WTC11 (cell line): ENCODE measurements at regions of chr17 and their contacts with region 1.

Region 1: GRCh38 chr17:77214743-77215142 is 74.0 kb downstream of the SEC14L1 start:
- DNase-seq: peak; percentile 72
- ATAC-seq: peak; percentile 96
- H3K4me3 Mint-ChIP-seq: no peak overlapping the region
- H3K27ac Mint-ChIP-seq: no peak overlapping the region
- H3K4me1 Mint-ChIP-seq: peaks cover 4% of the 10 kb centered on the region
- H3K27me3 Mint-ChIP-seq: no peaks in the 10 kb centered on the region
- CTCF ChIP-seq: no peak

Region 2: GRCh38 chr17:77107506-77108433 is 107.0 kb before region 1 on chr17:
- CTCF ChIA-PET with region 1: interaction called, 11 read pairs
- POLR2A ChIA-PET with region 1: no interaction called
- DNase-seq: no peak
- ATAC-seq: no peak
- H3K4me3 Mint-ChIP-seq: no peak overlapping the region
- H3K27ac Mint-ChIP-seq: peak overlapping the region; percentile 45
- H3K4me1 Mint-ChIP-seq: peaks cover 59% of the 10 kb centered on the region
- H3K27me3 Mint-ChIP-seq: no peaks in the 10 kb centered on the region
- CTCF ChIP-seq: no peak

Region 3: DNA sequence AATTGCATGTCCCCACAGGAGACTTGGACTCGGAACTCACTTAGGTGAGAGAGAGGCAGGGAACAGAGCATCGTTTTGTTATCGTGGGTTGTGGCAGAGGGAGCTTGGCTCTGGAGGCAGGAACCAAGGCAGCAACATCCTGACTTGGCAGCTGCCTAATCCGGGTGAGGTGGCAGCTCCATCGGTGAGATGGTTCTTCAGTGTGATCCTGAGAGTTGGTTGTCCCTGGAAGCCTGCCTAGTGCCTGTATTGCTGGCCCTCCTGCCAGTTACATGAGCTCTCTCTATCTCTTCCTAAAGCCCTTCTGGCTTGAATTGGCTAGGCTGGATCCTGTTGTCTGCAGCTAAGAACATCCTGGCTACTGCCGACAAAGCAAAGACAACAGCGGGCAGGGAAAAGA is 93.9 kb before region 1 on chr17:
- CTCF ChIA-PET with region 1: interaction called, 10 read pairs
- POLR2A ChIA-PET with region 1: no interaction called
- DNase-seq: no peak
- ATAC-seq: no peak
- H3K4me3 Mint-ChIP-seq: no peak overlapping the region
- H3K27ac Mint-ChIP-seq: no peak overlapping the region
- H3K4me1 Mint-ChIP-seq: no peaks in the 10 kb centered on the region
- H3K27me3 Mint-ChIP-seq: no peaks in the 10 kb centered on the region
- CTCF ChIP-seq: no peak

Region 4: GRCh38 chr17:77182205-77183172 is 32.3 kb before region 1 on chr17:
- CTCF ChIA-PET with region 1: interaction called, 13 read pairs
- POLR2A ChIA-PET with region 1: no interaction called
- DNase-seq: no peak
- ATAC-seq: no peak
- H3K4me3 Mint-ChIP-seq: no peak overlapping the region
- H3K27ac Mint-ChIP-seq: peak overlapping the region; percentile 61
- H3K4me1 Mint-ChIP-seq: peaks cover 11% of the 10 kb centered on the region
- H3K27me3 Mint-ChIP-seq: no peaks in the 10 kb centered on the region
- CTCF ChIP-seq: no peak

Region 5: GRCh38 chr17:77203436-77203835 is 11.3 kb before region 1 on chr17:
- CTCF ChIA-PET with region 1: interaction called, 10 read pairs
- POLR2A ChIA-PET with region 1: no interaction called
- DNase-seq: no peak
- ATAC-seq: no peak
- H3K4me3 Mint-ChIP-seq: no peak overlapping the region
- H3K27ac Mint-ChIP-seq: 0 out of 2 replicates have a peak overlapping the region, but pooled peaks have one; percentile 68
- H3K4me1 Mint-ChIP-seq: peaks cover 5% of the 10 kb centered on the region; the same call in 1 of the 2 replicates
- H3K27me3 Mint-ChIP-seq: no peaks in the 10 kb centered on the region
- CTCF ChIP-seq: no peak

Region 6: GRCh38 chr17:77235370-77235941 is 20.7 kb after region 1 on chr17:
- CTCF ChIA-PET with region 1: interaction called, 17 read pairs
- POLR2A ChIA-PET with region 1: no interaction called
- DNase-seq: no peak
- ATAC-seq: no peak
- H3K4me3 Mint-ChIP-seq: no peak overlapping the region
- H3K27ac Mint-ChIP-seq: no peak overlapping the region
- H3K4me1 Mint-ChIP-seq: peaks cover 12% of the 10 kb centered on the region
- H3K27me3 Mint-ChIP-seq: no peaks in the 10 kb centered on the region
- CTCF ChIP-seq: no peak